AG04449 (cell line): ENCODE measurements at regions of chr3 and their contacts with region 1.

Region 1: GRCh38 chr3:112013058-112013783 is 14.5 kb downstream of the TAGLN3 start:
- DNase-seq: peak; percentile 23
- H3K4me3 ChIP-seq: no peak overlapping the region
- CTCF ChIP-seq: peak; percentile 70

Region 2: GRCh38 chr3:111691293-111691909 is 321.8 kb before region 1 on chr3:
- CTCF ChIA-PET with region 1: interaction called, 23 read pairs
- POLR2A ChIA-PET with region 1: no interaction called
- DNase-seq: no peak
- H3K4me3 ChIP-seq: no peak overlapping the region
- CTCF ChIP-seq: peak; percentile 43

Region 3: GRCh38 chr3:111967651-111968274 is 45.5 kb before region 1 on chr3:
- CTCF ChIA-PET with region 1: interaction called, 16 read pairs
- POLR2A ChIA-PET with region 1: no interaction called
- DNase-seq: peak; percentile 65
- H3K4me3 ChIP-seq: no peak overlapping the region
- CTCF ChIP-seq: peak; percentile 87

Region 4: GRCh38 chr3:111989061-111989678 is 24.1 kb before region 1 on chr3:
- CTCF ChIA-PET with region 1: interaction called, 219 read pairs
- POLR2A ChIA-PET with region 1: no interaction called
- DNase-seq: peak; percentile 49
- H3K4me3 ChIP-seq: no peak overlapping the region
- CTCF ChIP-seq: peak; percentile 70

Region 5: DNA sequence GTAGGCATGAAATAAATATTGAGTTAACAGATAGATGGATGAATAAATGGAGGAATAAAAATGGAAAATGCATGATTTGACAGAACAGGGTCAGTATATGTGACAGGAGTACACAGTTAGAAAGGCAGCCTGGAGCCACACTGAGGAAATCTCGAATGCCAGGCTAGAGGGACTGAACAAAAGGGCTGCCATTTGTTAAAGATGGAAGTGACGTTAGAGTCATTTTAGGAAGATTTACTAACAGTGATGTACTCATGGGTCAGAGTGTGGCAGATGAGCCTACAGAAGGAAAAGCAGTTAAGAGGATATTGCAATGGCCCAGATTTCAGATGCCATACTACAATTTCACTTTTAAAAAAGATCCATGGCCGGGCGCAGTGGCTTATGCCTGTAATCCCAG is 13.9 kb after region 1 on chr3:
- CTCF ChIA-PET with region 1: interaction called, 42 read pairs
- POLR2A ChIA-PET with region 1: no interaction called
- DNase-seq: no peak
- H3K4me3 ChIP-seq: no peak overlapping the region
- CTCF ChIP-seq: no peak

Region 6: GRCh38 chr3:112043603-112044201 is 30.5 kb after region 1 on chr3:
- CTCF ChIA-PET with region 1: interaction called, 39 read pairs
- POLR2A ChIA-PET with region 1: no interaction called
- DNase-seq: no peak
- H3K4me3 ChIP-seq: no peak overlapping the region
- CTCF ChIP-seq: peak; percentile 75

Region 7: DNA sequence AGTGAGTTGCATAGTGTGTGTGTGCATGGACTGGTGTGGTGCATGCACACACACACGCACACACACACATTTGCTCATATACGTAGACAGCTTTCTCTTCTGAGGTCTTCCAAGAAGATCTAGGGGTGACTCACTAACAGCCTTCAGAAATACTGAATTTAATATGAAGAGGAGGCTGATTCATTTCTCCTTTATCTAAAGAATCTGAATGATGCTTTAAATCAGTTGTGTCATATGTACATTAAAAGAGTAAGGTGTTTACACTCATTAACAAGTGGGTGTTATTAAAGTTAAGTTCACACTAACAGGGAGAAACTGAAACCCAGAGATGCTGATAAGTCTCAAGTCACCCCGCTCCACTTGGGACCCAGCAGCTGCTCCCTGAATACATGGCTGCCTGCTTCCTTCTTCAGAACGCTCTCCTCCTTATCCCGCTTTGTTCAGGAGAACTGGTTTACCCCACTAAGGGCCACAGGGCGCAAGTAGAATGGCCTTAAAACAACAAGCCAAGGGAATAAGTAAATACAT is 43.3 kb after region 1 on chr3:
- CTCF ChIA-PET with region 1: interaction called, 10 read pairs
- POLR2A ChIA-PET with region 1: no interaction called
- DNase-seq: peak; percentile 69
- H3K4me3 ChIP-seq: no peak overlapping the region
- CTCF ChIP-seq: no peak